Esophagus muscularis mucosa (tissue), 4 donors: ENCODE measurements at regions of chr6 and their contacts with region 1.

Region 1: GRCh38 chr6:122530440-122531046 is 58.9 kb upstream of the SERINC1 start:
- DNase-seq: no peak
- H3K4me3 ChIP-seq: no peak overlapping the region
- H3K27ac ChIP-seq: no peak overlapping the region
- H3K4me1 ChIP-seq: no peaks in the 10 kb centered on the region
- H3K27me3 ChIP-seq: no peaks in the 10 kb centered on the region
- CTCF ChIP-seq: peak; percentile 87 to 91 (median 90)
- EP300 ChIP-seq: no peak
- POLR2A ChIP-seq: no peak

Region 2: DNA sequence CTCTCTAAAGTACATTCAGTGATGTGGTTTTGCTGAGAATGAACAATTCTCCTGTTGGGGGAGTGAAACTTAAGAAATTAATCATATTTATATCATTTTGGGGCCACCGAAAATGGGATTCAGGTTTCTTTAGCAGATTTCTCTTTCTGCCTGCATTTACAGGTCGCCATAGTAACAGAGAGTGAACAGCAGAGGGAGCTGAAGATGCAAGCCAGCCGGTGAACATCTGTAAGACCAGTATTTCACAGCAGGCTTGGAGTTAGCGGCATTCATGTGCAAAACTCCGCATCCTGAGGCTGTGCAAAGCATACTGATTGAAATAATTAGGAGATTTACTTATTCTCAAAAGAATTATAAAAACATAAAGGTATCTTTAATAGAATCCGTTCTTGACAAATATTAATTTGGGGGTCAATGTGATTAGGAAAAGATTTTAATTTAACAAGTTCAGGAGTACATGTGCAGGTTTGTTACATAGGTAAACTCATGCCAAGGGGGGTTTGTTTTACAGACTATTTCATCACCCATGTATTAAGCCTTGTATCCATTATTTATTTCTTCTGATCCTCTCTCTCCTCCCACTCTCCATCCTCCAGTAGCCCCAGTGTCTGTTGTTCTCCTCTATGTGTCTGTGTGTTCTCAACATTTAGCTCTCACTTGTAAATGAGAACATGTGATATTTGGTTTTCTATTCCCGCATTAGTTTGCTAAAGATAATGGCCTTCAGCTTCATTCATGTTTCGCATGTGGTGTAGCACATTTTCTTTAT is 148.9 kb before region 1 on chr6:
- intact Hi-C with region 1: loop called (anchors 2 kb)
- DNase-seq: no peak
- H3K4me3 ChIP-seq: no peak overlapping the region
- H3K27ac ChIP-seq: no peak overlapping the region
- H3K4me1 ChIP-seq: peaks cover 0 to 6% (median 3%) of the 10 kb centered on the region in 4 donors
- H3K27me3 ChIP-seq: no peaks in the 10 kb centered on the region
- CTCF ChIP-seq: peak; percentile 79 to 88 (median 79)
- EP300 ChIP-seq: no peak
- POLR2A ChIP-seq: no peak

Region 3: GRCh38 chr6:122471107-122472021 is 59.2 kb before region 1 on chr6 and contains the start of gene SERINC1:
- intact Hi-C with region 1: loop called (anchors 5 kb)
- DNase-seq: peak; percentile 98
- H3K4me3 ChIP-seq: peak within 1 kb of the TSS; percentile 81 to 92 (median 86)
- H3K27ac ChIP-seq: peak within 1 kb of the TSS; percentile 93 to 97 (median 96)
- H3K4me1 ChIP-seq: peaks cover 18 to 46% (median 44%) of the 10 kb centered on the region in 4 donors
- H3K27me3 ChIP-seq: no peaks in the 10 kb centered on the region
- CTCF ChIP-seq: no peak
- EP300 ChIP-seq: no peak
- POLR2A ChIP-seq: peak; percentile 73
- total RNA-seq, gene SERINC1: 215 to 314 (median 276) TPM

Region 4: GRCh38 chr6:122491919-122492555 is 38.5 kb before region 1 on chr6:
- intact Hi-C with region 1: loop called (anchors 2 kb)
- DNase-seq: no peak
- H3K4me3 ChIP-seq: no peak overlapping the region
- H3K27ac ChIP-seq: no peak overlapping the region
- H3K4me1 ChIP-seq: no peaks in the 10 kb centered on the region
- H3K27me3 ChIP-seq: no peaks in the 10 kb centered on the region
- CTCF ChIP-seq: peak; percentile 67 to 88 (median 71)
- EP300 ChIP-seq: no peak
- POLR2A ChIP-seq: no peak